HEK293T (cell line): ENCODE measurements at regions of chr4 and their contacts with region 1.

Region 1: DNA sequence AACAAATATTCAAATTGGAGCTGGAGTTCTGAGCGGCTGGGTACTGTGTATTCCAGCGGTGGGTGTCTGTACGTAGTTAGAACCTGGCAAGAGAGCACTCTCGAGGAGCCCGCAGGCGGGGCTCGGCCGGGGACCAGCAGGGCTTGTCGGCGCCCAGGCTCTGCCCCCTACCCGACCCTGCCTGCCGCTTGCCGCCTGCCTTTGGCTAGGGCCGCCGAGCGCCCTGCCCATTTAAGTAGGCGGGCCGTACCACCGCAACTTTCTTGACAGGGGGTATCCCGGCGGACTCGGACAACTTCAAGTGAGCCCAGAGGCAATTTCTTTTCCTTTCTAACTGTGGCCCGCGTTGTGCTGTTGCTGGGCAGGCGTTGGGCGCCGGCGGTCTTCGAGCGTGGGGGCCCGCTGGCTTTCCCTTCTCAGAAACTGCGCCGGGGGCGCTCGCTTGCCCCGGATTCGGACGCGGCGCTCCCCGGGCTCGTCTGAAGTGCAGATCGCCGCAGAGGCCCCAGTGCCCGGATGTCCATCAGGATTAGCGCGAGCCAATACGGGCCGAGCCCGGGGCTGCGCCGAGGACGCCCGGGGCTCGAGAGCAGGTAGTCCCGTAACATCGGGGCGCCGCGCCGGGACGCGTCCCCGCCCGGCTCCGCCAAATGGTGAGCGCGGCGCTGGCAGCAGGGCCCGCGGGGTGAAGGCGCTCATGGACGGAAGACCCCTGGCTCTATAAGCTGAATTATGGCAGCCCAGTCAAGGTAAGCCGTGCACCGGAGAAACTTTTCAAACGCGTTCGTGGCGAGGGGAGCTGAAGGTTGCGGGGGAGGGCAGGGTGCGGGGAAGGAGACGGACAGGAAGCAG is 72.1 kb downstream of the AFF1 start:
- DNase-seq: peak; percentile 81

Region 2: DNA sequence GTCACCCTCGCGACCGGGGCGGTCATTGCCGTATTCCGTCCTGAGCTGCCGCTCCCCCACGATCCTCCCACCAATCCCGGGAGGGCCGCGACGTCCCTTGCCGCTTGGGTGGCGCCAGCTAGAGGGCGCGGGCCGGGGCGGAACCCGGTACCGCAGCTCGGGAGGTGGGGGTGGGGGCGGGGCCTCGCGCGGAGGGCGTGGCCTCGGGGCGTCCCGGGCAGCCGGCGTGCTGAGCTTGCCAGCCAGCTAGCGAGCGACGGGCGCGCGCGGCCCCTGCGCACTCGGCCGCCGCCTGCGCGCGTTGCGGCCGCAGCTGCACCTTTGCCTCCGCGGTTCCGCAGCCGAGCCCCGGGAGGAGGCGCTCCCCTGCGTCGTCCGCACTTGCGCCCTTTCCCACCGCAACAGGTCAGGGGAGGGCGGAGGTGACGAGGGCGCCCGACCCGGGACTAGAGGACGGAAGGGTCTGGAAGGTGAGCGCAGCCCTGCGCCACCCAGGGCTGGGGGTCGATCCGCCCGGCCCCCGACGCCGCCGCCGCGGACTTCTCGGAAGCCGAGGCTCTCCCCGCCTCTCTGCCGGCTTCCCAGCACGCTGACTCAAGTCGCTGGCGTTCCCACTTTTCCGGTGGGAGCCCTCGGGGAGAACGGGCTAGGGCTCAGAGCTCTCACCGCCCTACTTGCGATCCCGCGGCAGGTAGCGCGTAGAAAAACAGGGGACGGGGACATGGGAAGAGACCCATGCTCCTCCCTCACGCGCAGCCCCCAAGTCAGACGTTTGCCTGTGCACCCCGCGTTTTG is 71.9 kb before region 1 on chr4 and contains the start of gene AFF1:
- CTCF ChIA-PET with region 1: interaction called, 3 read pairs
- POLR2A ChIA-PET with region 1: interaction called, 33 read pairs
- DNase-seq: peak; percentile 93

Region 3: GRCh38 chr4:87032884-87033533 is 26.1 kb after region 1 on chr4:
- CTCF ChIA-PET with region 1: no interaction called
- POLR2A ChIA-PET with region 1: no interaction called
- DNase-seq: no peak